PC-9 (cell line): ENCODE measurements at regions of chr1 and their contacts with region 1.

Region 1: GRCh38 chr1:201254625-201255506 is 28.4 kb upstream of the PKP1 start:
- DNase-seq: peak in 1 of 2 experiments; percentile 77
- H3K4me3 ChIP-seq: no peak overlapping the region
- H3K27ac ChIP-seq: no peak overlapping the region
- H3K4me1 ChIP-seq: peaks cover 8% of the 10 kb centered on the region; the same call in 1 of the 2 replicates
- H3K27me3 ChIP-seq: no peaks in the 10 kb centered on the region
- CTCF ChIP-seq: peak; percentile 99

Region 2: DNA sequence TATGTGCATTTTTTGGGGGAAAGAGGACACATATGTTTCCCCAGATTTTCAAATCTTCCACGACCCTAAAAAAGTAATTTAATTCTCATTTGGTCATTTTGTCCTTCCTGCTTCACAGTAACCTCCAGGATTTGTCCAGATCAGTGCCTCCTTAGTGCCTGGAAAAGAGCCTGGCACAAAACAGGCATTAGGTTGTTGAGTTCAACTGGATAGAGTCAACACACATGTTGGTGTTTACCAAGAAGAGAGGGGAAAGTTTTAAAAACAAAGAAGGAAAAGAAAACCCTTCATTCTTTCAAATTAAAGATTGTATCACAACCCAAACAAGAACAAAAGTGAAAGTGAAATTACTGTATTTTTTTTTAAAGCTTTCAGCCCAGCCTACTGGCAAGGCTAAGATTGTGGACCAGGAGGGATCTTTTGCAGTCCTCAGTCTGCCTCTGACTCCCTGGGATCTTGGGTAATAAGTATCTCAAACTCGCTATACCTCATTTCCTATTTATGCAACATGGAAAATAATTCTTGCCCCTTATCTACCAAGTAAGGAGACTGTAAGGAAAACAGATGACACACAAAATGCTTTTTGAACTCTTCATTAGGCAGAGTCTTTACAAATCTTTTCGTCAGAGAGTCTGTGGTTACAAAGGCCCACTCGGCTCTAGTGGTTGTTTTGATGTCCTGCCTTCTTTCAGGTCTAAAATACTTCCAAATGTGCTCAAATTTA is 902.9 kb before region 1 on chr1:
- CTCF ChIA-PET with region 1: no interaction called
- POLR2A ChIA-PET with region 1: interaction called, 11 read pairs
- intact Hi-C with region 1: no loop called
- DNase-seq: peak in 1 of 2 experiments; percentile 65
- H3K4me3 ChIP-seq: no peak overlapping the region
- H3K27ac ChIP-seq: peak overlapping the region; percentile 33
- H3K4me1 ChIP-seq: peaks cover 19% of the 10 kb centered on the region
- H3K27me3 ChIP-seq: no peaks in the 10 kb centered on the region
- CTCF ChIP-seq: no peak

Region 3: GRCh38 chr1:201326710-201327109 is 71.8 kb after region 1 on chr1:
- CTCF ChIA-PET with region 1: no interaction called
- POLR2A ChIA-PET with region 1: interaction called, 12 read pairs
- intact Hi-C with region 1: no loop called
- DNase-seq: no peak
- H3K4me3 ChIP-seq: no peak overlapping the region
- H3K27ac ChIP-seq: no peak overlapping the region
- H3K4me1 ChIP-seq: no peaks in the 10 kb centered on the region
- H3K27me3 ChIP-seq: peaks cover 18% of the 10 kb centered on the region
- CTCF ChIP-seq: no peak

Region 4: GRCh38 chr1:201361652-201362504 is 107.0 kb after region 1 on chr1:
- CTCF ChIA-PET with region 1: interaction called, 8 read pairs
- POLR2A ChIA-PET with region 1: no interaction called
- intact Hi-C with region 1: loop called (anchors 1 kb)
- DNase-seq: peak in 1 of 2 experiments; percentile 58
- H3K4me3 ChIP-seq: no peak overlapping the region
- H3K27ac ChIP-seq: no peak overlapping the region
- H3K4me1 ChIP-seq: no peaks in the 10 kb centered on the region
- H3K27me3 ChIP-seq: peaks cover 18% of the 10 kb centered on the region
- CTCF ChIP-seq: peak; percentile 95

Region 5: DNA sequence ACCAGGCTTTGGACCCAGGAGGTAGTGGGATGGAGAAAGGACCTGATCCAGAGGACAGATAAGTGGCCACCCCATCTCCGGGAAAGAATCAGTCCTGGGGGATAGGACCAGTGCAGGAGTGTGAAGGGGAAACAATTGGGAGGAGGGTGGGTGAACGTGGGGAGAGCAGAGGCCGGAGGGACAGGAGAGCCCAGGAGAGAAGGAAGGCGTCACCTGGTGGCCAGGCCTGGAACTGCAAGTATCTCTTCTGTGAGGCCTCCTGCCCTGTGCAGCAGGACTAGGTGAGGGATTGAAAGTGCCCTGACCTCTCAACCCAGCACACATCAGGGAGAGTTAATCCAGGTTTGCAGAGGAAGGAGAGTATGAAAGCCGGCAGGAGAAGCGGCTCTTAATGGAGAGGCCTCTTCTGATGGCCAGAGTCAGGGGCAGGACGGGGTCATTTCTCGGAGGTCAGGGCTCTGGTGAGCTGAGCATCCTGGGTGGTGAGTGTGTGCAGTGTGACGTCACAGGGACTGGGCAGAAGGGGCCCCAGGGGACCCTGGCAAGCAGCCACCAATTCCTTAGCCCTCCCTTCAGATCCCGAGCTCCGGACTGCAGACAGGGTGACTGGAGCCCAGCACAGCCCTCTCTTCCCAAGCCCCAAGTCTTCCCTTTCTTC is 153.4 kb after region 1 on chr1:
- CTCF ChIA-PET with region 1: no interaction called
- POLR2A ChIA-PET with region 1: no interaction called
- intact Hi-C with region 1: loop called (anchors 1 kb)
- DNase-seq: peak; percentile 67 to 84
- H3K4me3 ChIP-seq: no peak overlapping the region
- H3K27ac ChIP-seq: no peak overlapping the region
- H3K4me1 ChIP-seq: no peaks in the 10 kb centered on the region
- H3K27me3 ChIP-seq: peaks cover 9% of the 10 kb centered on the region; the same call in 1 of the 2 replicates
- CTCF ChIP-seq: peak; percentile 95

Region 6: DNA sequence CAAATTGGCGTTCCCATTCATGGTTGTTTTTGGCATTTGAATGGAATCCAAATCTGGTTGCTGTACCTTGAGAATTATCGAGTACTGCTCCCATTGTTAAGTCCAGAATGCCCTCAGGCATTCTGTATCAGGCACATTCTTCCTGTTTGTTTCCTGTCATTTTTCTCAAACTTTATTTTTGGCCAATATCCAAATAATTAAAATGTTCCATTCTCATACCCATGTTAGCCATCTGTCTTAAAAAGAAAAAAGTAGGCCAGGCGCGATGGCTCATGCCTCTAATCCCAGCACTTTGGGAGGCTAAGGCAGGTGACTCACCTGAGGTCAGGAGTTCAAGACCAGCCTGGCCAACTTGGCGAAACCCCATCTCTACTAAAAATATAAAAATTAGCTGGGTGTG is 604.6 kb after region 1 on chr1:
- CTCF ChIA-PET with region 1: no interaction called
- POLR2A ChIA-PET with region 1: no interaction called
- intact Hi-C with region 1: no loop called
- DNase-seq: peak; percentile 48 to 68
- H3K4me3 ChIP-seq: no peak overlapping the region
- H3K27ac ChIP-seq: no peak overlapping the region
- H3K4me1 ChIP-seq: 0 out of 2 replicates have a peak, but pooled peaks cover 6% of the 10 kb centered on the region
- H3K27me3 ChIP-seq: no peaks in the 10 kb centered on the region
- CTCF ChIP-seq: no peak